SK-N-SH (cell line): ENCODE measurements at regions of chr10 and their contacts with region 1.

Region 1: DNA sequence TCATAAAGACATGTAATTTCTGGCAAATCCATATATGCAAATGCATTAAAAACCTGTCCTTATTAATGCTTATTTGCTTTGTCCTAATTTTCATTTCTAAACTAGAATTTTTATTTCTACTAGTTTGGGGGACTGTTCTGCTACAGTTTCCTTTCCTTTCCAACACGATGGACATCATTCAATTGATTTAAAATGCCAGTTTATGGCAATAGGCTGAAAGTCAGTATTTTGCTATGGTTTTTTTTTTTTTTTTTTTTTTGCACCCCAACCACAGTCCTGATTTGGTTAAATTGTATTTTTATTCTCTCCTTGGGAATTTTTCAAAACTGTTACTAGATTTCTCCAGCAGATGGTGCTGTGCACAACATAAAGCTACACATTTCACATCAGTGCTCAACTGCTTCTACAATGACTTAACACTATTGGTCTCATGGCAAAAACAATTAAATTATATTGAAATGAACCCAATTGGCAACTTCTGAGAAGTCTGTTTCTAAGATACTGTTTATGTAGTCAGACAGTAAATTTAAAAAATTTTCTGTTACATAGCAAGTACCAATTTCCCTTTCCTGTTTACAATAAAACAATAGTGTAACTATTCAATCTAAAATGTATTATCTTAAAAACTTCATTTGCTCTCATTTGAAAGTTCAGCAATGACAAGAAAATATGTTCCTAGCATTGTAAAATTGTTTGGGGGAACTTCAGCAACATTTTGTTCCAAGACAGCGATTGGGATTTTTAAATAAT is 193.8 kb upstream of the CCDC6 start:
- DNase-seq: peak; percentile 37
- H3K4me3 ChIP-seq: no peak overlapping the region; a peak in 1 of 4 replicates
- H3K27ac ChIP-seq: no peak overlapping the region
- H3K4me1 ChIP-seq: no peaks in the 10 kb centered on the region; a peak in 2 of 4 replicates
- H3K27me3 ChIP-seq: no peaks in the 10 kb centered on the region
- CTCF ChIP-seq: peak; percentile 71
- EP300 ChIP-seq: no peak
- RAD21 ChIP-seq: peak; percentile 85

Region 2: DNA sequence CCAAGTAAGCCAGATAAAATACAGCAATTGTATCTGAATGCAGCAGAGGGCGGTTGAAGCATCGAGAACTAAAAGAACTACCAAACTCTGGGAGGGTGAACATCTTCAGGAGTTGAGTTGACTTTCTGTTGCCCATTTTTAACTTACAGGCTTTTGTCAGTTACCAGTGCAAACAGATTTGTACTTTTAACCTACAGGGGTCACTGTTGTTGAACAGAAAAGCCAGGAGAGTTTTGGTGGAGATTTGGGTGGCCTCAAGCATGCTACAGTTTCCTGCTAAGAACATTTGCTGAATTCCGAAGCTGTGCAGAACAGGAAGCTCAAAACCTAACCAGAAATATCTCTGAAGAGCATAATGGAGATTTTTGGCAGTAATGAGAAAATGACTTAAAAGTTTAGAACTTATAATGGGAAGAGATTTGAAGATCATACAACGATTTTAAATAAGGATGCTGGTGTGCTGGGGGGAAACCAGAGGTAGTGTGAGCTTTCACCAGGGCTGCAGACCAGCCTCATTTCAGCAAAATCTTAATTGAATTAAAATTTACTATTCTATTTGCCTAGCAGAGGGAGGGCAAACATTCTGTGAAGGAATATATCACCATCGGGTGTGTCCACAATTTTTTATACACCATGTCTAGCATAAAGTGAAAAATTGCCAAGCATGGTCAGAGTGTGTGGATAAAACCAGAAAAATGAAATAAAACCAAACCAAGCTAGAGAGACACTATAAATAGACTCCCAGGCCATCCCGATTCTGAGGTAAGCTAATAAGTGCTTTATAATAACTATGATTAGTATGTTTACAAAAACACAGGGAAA is 14.8 kb after region 1 on chr10:
- CTCF ChIA-PET with region 1: interaction called, 19 read pairs
- POLR2A ChIA-PET with region 1: no interaction called
- DNase-seq: peak; percentile 14
- H3K4me3 ChIP-seq: no peak overlapping the region; a peak in 1 of 4 replicates
- H3K27ac ChIP-seq: peak overlapping the region; percentile 28 to 51; a peak in 2 of 4 replicates
- H3K4me1 ChIP-seq: peaks cover 0 to 6% of the 10 kb centered on the region in 2 experiments; a peak in 1 of 4 replicates
- H3K27me3 ChIP-seq: no peaks in the 10 kb centered on the region
- CTCF ChIP-seq: peak; percentile 75
- EP300 ChIP-seq: no peak
- RAD21 ChIP-seq: peak; percentile 71